Breast epithelium (tissue), 4 donors: ENCODE measurements at regions of chr2 and their contacts with region 1.

Region 1: GRCh38 chr2:171025214-171025613 is 96.2 kb downstream of the GORASP2 start:
- DNase-seq: no peak
- H3K4me3 ChIP-seq: no peak overlapping the region
- H3K27ac ChIP-seq: no peak overlapping the region
- H3K4me1 ChIP-seq: no peaks in the 10 kb centered on the region
- H3K27me3 ChIP-seq: no peaks in the 10 kb centered on the region
- CTCF ChIP-seq: no peak
- POLR2A ChIP-seq: no peak

Region 2: GRCh38 chr2:169694113-169694903 is 1330.9 kb before region 1 on chr2 and contains the starts of genes CFAP210 and PHOSPHO2:
- intact Hi-C with region 1: no loop called
- DNase-seq: peak; percentile 99 to 100
- H3K4me3 ChIP-seq: peak within 1 kb of the TSS; percentile 80 to 98 (median 86)
- H3K27ac ChIP-seq: peak within 1 kb of the TSS; percentile 97 to 98
- H3K4me1 ChIP-seq: peaks cover 0 to 7% of the 10 kb centered on the region in 2 donors
- H3K27me3 ChIP-seq: no peaks in the 10 kb centered on the region
- CTCF ChIP-seq: no peak
- POLR2A ChIP-seq: peak; percentile 84
- total RNA-seq, gene CFAP210: 0.66 to 3.4 TPM in 2 of 3 donors, not detected in the other
- total RNA-seq, gene PHOSPHO2: 9.1 to 17.4 (median 16.2) TPM

Region 3: DNA sequence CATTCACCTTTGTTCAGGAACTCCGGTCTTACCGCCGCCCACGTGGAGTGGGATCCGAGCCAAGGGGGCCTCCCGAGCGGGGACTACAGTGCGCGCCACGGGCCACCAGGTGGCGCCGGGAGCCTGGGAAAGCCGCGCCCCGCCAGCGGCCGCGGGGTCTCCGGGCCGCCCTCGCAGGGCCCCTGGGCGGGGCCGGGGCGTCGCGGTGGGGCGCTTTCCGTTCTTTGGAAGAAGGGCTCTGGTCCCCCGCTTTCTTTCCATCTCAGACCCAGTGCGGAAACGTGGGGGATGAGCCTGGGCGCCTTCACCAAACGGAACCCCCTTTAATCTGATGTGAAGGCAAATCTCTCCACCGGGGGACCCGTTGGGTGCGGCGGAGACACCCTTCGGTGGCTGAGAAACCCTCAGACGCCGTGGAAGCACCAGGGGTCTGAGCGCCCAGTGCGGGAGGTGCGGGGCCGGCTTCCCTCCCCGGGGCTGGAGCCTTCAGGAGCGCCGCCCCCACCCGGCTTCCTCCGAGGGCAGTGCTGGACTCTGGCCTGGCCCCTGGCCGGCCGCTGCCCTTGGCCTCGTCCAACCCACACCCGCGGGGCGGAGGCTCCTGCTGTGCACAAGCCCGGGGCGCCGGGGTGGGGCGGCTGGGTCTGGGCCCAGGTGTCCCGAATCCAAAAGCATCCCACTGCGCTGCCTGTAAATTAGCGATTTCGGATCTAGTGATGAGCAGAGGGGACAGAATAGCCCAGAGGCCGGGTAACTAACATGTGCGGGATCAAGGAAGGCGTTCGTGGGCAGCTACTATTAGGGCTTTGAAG is 51.5 kb before region 1 on chr2:
- intact Hi-C with region 1: no loop called
- DNase-seq: peak; percentile 89 to 95
- H3K4me3 ChIP-seq: peak overlapping the region; percentile 58 to 84 (median 77)
- H3K27ac ChIP-seq: peak overlapping the region; percentile 88 to 91
- H3K4me1 ChIP-seq: peaks cover 0 to 10% of the 10 kb centered on the region in 2 donors
- H3K27me3 ChIP-seq: no peaks in the 10 kb centered on the region
- CTCF ChIP-seq: peak in 2 of 3 donors; percentile 90 to 99
- POLR2A ChIP-seq: no peak

Region 4: DNA sequence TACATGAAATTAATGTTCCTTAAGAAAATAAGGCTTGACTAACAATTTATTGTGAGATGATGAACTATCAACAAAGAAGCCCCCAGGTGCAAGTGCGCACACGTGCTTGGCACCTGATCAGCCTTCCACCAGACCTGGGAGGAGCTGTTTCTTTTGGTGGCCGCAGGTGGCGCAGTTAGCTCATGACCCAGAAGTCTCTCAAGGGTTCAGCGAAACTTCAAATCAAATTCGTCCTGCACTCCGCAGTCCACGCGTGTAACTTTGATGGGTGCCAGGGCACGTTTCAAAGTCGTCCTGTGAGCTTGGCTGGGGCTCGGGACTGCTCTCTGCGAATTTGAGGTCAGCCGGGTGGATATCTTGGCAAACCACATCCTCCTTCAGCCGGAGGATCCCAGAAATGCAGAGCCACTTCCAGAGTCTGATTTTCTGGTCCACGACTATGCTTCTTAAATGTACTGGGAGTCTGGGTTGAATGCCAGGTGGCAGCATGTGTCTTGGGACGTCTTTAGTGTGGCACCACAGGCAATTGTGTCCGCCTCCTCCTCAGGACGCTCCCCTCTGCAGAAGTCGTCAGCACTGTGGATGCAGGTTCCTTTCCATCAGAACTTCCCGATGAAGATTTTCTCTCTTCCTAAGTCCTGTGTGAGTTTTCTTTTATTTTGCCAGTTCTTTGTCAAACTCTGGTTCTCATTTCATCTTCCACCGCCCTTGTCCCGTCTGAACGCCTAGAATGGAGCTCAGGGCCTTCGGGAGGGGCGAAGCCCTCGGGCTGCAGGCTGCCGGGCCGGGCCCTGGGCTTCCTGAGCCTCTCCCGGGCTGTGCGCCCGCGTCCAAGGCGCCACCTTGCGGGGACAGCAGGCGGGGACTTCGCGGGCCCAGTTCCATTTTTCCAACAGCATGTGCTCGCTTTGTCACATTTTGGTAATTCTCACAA is 1649.1 kb after region 1 on chr2:
- intact Hi-C with region 1: loop called (anchors 10 kb)
- DNase-seq: no peak
- H3K4me3 ChIP-seq: no peak overlapping the region
- H3K27ac ChIP-seq: no peak overlapping the region
- H3K4me1 ChIP-seq: no peaks in the 10 kb centered on the region
- H3K27me3 ChIP-seq: no peaks in the 10 kb centered on the region
- CTCF ChIP-seq: no peak
- POLR2A ChIP-seq: no peak